CD4-positive, alpha-beta memory T cell (primary cell): ENCODE measurements at regions of chr2 and their contacts with region 1.

Region 1: DNA sequence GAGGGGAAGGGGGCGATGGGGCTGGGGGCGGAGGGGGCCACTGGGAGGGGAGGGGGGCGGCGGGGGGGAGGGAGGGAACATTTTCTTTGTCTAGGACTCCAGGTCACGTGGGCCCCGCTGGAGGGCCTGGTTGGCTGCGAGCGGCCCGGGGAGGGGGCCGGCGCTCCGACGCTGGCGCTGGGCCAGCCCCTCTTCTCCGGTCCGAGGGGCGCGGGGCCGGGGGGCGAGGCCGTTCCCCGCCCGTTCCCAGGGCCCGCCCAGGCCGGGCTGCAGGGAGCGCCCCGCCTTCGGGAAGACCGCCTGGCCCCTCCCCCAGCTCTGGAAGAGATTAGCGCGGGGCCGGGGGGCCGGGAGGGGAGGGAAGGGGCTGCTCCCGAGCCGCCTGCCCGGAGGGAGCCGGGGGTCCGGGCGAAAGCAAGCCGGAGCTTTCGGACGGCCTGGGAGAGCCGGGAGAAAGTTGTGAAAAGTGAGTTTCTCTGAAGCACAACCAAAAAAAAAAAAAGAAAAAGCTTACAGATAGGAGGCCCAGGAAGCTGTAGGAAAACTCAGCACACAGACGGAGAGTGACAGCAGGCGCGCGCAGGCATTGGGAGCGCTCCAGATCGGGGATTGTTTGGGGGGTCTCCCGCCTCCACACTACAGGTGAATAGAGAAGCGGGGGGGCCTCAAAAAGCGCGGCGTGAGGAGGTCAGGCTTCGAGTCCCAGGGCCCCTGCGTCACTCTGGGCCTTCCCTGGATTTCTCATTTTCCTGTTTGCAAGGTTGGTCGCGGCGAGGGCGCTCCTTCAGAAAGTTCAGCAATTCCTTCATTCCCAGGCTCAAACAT is 84.1 kb upstream of the POMC start:
- DNase-seq: peak in 4 of 5 donors; percentile 45 to 72 (median 48)
- H3K4me3 ChIP-seq: peak overlapping the region in 1 of 2 donors; percentile 56
- H3K4me3 Mint-ChIP-seq: peak overlapping the region; percentile 73 to 86 (median 82)
- H3K27ac ChIP-seq: peak overlapping the region; percentile 59
- H3K27ac Mint-ChIP-seq: peak overlapping the region; percentile 57 to 91 (median 80)
- H3K4me1 ChIP-seq: peaks cover 19% of the 10 kb centered on the region
- H3K4me1 Mint-ChIP-seq: peaks cover 16 to 51% (median 32%) of the 10 kb centered on the region in 4 donors
- H3K27me3 ChIP-seq: no peaks in the 10 kb centered on the region
- H3K27me3 Mint-ChIP-seq: no peaks in the 10 kb centered on the region

Region 2: GRCh38 chr2:25215948-25216679 is 36.4 kb before region 1 on chr2:
- CTCF ChIA-PET with region 1: no interaction called
- POLR2A ChIA-PET with region 1: interaction called, 8 read pairs
- intact Hi-C with region 1: loop called (anchors 2 kb)
- DNase-seq: peak; percentile 78 to 87 (median 86)
- H3K4me3 ChIP-seq: peak overlapping the region; percentile 51 to 61
- H3K4me3 Mint-ChIP-seq: peak overlapping the region; percentile 81 to 89 (median 83)
- H3K27ac ChIP-seq: peak overlapping the region; percentile 55
- H3K27ac Mint-ChIP-seq: peak overlapping the region; percentile 67 to 93 (median 86)
- H3K4me1 ChIP-seq: peaks cover 9% of the 10 kb centered on the region
- H3K4me1 Mint-ChIP-seq: peaks cover 6 to 29% (median 14%) of the 10 kb centered on the region in 4 donors
- H3K27me3 ChIP-seq: no peaks in the 10 kb centered on the region
- H3K27me3 Mint-ChIP-seq: no peaks in the 10 kb centered on the region

Region 3: DNA sequence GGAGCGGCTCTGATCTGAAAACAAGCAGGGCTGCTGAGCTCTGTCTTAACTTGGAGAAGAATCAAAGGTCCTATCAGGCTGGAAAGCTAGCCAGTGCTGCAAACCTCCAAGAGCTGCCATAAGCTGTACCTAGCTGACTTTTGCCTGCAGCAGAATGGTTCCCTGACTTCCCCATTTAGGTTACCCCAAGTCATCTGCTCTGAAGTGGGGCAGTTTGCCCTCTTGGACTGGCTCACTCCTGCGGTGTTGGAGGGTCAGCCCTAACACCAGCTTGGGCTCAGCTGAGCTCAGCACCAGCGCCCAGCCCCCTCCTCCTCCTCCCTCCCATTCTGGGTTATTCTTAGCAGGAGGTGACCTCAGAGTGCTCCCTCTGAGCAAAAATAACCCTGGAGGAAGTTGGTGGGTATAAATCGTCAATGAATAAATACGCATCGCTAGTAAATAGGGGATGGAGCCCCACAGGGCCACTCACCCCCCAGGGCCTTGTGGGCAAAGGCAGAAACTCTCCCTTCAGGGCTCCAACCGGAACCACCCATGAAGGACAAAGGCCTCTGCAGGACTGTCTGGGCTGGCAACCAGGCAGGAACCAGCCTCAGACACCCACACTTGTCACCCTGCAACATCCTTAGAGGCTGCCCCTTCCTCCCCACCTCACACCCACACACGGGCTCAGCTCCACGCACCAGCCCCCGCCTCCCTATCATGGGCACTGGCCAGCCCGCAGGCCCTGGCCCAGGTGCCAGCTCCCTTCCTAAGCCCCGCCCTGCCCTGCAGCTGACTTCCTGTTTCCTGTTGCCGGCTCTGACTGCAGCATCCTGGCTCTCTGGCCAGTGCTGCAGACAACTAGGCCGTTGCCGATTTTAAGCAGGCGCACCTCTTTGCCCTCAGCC is 42.3 kb after region 1 on chr2:
- CTCF ChIA-PET with region 1: interaction called, 3 read pairs
- POLR2A ChIA-PET with region 1: interaction called, 22 read pairs
- intact Hi-C with region 1: no loop called
- DNase-seq: peak; percentile 73 to 90 (median 76)
- H3K4me3 ChIP-seq: peak overlapping the region; percentile 32 to 39
- H3K4me3 Mint-ChIP-seq: peak overlapping the region; percentile 72 to 90 (median 82)
- H3K27ac ChIP-seq: peak overlapping the region; percentile 69
- H3K27ac Mint-ChIP-seq: peak overlapping the region; percentile 86 to 97 (median 93)
- H3K4me1 ChIP-seq: peaks cover 52% of the 10 kb centered on the region
- H3K4me1 Mint-ChIP-seq: peaks cover 28 to 43% (median 37%) of the 10 kb centered on the region in 4 donors
- H3K27me3 ChIP-seq: no peaks in the 10 kb centered on the region
- H3K27me3 Mint-ChIP-seq: no peaks in the 10 kb centered on the region

Region 4: DNA sequence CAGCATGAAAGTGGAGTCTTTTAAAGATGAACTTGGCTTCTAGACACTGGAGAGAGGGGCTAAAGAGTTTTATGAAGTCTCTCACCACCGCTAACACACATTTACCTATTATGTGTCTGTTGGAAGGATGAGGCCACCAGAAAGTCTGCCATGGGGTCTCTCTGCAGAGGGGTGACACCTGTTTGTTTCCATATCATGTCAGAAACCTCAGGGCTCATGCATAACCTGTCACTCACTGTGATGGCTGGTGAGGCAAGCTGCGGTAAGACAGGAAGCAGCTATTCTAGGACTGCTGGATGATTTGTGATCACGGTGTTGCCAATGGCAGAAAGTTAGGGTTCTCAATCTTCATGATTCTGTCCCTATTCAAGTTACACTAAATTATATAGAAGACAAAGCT is 150.0 kb after region 1 on chr2:
- CTCF ChIA-PET with region 1: no interaction called
- POLR2A ChIA-PET with region 1: no interaction called
- intact Hi-C with region 1: no loop called
- DNase-seq: no peak
- H3K4me3 ChIP-seq: no peak overlapping the region
- H3K4me3 Mint-ChIP-seq: no peak overlapping the region
- H3K27ac ChIP-seq: no peak overlapping the region
- H3K27ac Mint-ChIP-seq: no peak overlapping the region
- H3K4me1 ChIP-seq: no peaks in the 10 kb centered on the region
- H3K4me1 Mint-ChIP-seq: peaks cover 0 to 5% (median under 1%) of the 10 kb centered on the region in 4 donors
- H3K27me3 ChIP-seq: no peaks in the 10 kb centered on the region
- H3K27me3 Mint-ChIP-seq: no peaks in the 10 kb centered on the region